CD14-positive monocyte (primary cell): ENCODE measurements at regions of chr20 and their contacts with region 1.

Region 1: DNA sequence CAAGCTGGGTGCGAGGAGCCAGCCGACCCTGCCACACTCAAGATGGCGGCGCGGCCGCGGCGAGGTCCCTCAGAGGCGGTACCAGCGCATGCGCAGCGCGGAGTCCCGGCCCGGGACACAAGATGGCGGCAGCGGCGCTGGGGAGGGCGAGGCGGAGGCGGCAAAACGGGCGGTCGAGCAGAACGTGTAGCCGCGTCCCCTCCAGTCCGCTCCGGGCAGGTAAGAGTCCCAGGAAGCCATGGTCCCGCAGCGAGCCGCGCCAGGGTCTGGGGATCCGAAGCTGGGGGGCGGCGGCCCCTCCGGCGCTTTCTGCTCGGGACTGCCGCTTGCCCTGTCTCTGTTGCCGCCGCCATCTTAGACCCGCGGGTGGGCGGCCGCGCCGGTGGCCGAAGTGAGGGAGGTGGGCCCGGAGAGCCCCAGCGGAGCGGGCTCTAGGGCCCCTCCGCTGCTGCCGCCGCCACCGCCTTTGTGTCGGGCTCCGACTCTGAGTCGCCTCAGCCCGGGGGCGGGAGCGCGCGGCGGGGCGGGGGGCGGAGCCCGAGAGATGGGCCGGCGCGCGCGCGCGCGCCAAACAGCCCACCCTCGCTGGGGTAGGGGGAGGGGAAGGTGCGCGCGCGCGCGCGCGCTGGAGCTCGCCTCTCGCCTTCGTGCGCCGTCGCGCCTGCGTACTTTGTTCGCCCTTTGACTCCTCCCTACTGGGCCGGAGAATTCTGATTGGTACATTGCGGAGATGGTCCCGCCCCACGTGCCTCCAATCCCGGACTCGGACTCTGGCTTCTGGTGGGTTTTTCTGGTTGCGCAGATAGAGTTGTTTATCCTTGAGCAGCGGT is at the start of gene PCIF1:
- DNase-seq: peak; percentile 97 to 98 (median 97)
- H3K4me3 ChIP-seq: peak within 1 kb of the TSS; percentile 98 to 100 (median 98)
- H3K4me3 Mint-ChIP-seq: peak within 1 kb of the TSS; percentile 96 to 99
- H3K27ac ChIP-seq: peak within 1 kb of the TSS; percentile 95
- H3K27ac Mint-ChIP-seq: peak within 1 kb of the TSS; percentile 96 to 99 (median 97)
- H3K4me1 ChIP-seq: peaks cover 16 to 21% of the 10 kb centered on the region in 2 donors
- H3K4me1 Mint-ChIP-seq: peaks cover 15% of the 10 kb centered on the region
- H3K27me3 ChIP-seq: no peaks in the 10 kb centered on the region
- H3K27me3 Mint-ChIP-seq: no peaks in the 10 kb centered on the region
- CTCF ChIP-seq: no peak
- polyA plus RNA-seq, gene PCIF1: 41.0 to 54.9 (median 50.4) TPM

Region 2: GRCh38 chr20:45798935-45799642 is 135.7 kb before region 1 on chr20:
- intact Hi-C with region 1: loop called in 1 of 2 experiments (anchors 10 kb)
- DNase-seq: peak; percentile 24 to 60 (median 53)
- H3K4me3 ChIP-seq: no peak overlapping the region
- H3K4me3 Mint-ChIP-seq: no peak overlapping the region
- H3K27ac ChIP-seq: peak overlapping the region in 1 of 2 donors; percentile 50
- H3K27ac Mint-ChIP-seq: peak overlapping the region in 5 of 7 donors; percentile 21 to 78 (median 62)
- H3K4me1 ChIP-seq: no peaks in the 10 kb centered on the region
- H3K4me1 Mint-ChIP-seq: peaks cover 12% of the 10 kb centered on the region
- H3K27me3 ChIP-seq: no peaks in the 10 kb centered on the region
- H3K27me3 Mint-ChIP-seq: peaks cover 0 to 2% (median 0%) of the 10 kb centered on the region in 3 donors
- CTCF ChIP-seq: peak; percentile 79

Region 3: DNA sequence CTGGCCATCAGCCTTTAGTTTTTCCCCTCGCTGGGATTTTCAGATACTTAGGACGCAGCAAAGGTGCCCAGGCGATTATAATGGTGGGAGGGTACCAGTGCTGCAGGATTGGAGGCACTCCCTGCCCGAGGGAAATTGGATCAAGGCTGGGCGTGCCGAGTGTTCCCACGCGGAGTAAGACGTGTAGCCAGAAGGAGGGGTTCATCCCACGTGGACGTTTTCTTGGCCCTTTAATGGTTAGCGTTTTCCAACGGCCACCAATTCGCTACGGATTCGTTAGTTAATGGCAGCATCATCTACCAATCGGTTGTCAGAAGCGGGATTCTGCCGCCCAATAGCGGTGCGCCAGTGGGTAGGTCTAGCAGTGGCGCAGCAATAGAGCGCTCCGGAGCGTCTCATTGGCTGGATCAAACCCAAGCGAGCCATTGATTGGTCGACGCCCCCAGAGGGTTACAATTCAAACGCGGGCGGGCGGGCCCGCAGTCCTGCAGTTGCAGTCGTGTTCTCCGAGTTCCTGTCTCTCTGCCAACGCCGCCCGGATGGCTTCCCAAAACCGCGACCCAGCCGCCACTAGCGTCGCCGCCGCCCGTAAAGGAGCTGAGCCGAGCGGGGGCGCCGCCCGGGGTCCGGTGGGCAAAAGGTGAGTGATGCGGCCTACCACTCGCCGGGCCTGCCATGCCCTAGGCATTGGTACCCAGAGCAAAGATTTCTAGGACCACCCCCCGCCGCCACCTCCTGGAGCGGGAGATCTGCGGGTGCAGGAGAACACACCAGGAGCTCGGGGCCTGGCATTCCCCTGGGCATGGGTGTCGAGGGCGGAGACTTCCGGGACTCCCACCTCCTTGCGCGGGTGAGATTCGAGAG is 122.4 kb before region 1 on chr20 and contains the start of gene UBE2C:
- intact Hi-C with region 1: loop called (anchors 10 kb)
- DNase-seq: peak; percentile 95 to 100 (median 97)
- H3K4me3 ChIP-seq: peak within 1 kb of the TSS; percentile 57 to 85 (median 80)
- H3K4me3 Mint-ChIP-seq: peak within 1 kb of the TSS; percentile 67 to 84
- H3K27ac ChIP-seq: peak within 1 kb of the TSS in 1 of 2 donors; percentile 65
- H3K27ac Mint-ChIP-seq: peak within 1 kb of the TSS; percentile 34 to 91 (median 75)
- H3K4me1 ChIP-seq: peaks cover 18 to 24% of the 10 kb centered on the region in 2 donors
- H3K4me1 Mint-ChIP-seq: peaks cover 22% of the 10 kb centered on the region
- H3K27me3 ChIP-seq: no peaks in the 10 kb centered on the region
- H3K27me3 Mint-ChIP-seq: no peaks in the 10 kb centered on the region
- CTCF ChIP-seq: no peak
- polyA plus RNA-seq, gene UBE2C: 0.15 to 0.58 TPM in 2 of 3 donors, not detected in the other

Region 4: DNA sequence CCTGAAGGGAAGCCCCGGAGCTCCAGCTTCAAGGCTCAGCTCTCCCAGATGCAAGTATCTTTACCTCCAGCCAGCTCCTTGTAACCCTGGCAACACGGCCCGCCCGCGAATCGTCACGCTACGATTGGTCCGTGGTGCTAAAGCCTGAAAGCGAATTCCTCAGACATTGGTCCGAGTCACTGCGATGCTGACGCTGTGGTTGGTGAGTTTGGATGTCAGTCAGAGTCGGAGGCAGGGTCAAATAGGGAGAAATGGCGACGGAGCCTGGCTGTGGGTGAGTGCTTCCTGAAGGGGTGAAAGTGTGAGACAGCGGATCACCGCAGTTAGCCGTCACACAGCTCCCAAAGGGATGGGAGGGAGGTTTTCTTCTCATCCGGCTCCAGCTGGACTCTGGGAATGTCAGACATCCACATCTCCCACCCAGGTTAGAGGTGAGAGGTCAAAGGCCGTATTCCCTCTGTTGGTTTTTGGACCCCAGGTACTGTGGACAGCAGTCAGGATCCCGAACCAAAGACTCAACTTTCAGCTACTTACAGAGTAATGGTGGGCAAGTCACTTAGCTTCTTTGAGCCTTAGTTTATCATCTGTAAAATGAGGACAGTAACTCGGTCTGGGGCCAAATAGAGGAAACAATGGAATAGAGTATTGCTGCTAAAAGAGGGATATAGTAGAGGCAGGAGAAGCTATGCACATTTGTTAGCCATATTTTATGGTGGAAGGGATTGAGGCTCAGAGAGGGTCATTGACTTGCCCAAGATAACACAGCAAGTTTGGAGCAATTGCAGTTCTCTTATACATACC is 53.6 kb before region 1 on chr20 and contains the start of gene ZSWIM1:
- intact Hi-C with region 1: loop called (anchors 1 to 5 kb)
- DNase-seq: peak; percentile 98 to 99 (median 98)
- H3K4me3 ChIP-seq: peak within 1 kb of the TSS; percentile 71 to 81 (median 78)
- H3K4me3 Mint-ChIP-seq: peak within 1 kb of the TSS; percentile 85 to 95
- H3K27ac ChIP-seq: peak within 1 kb of the TSS; percentile 76 to 95
- H3K27ac Mint-ChIP-seq: peak within 1 kb of the TSS; percentile 96 to 98 (median 98)
- H3K4me1 ChIP-seq: peaks cover 28 to 39% of the 10 kb centered on the region in 2 donors
- H3K4me1 Mint-ChIP-seq: peaks cover 33% of the 10 kb centered on the region
- H3K27me3 ChIP-seq: no peaks in the 10 kb centered on the region
- H3K27me3 Mint-ChIP-seq: no peaks in the 10 kb centered on the region
- CTCF ChIP-seq: no peak
- polyA plus RNA-seq, gene ZSWIM1: 2.5 to 2.6 (median 2.5) TPM

Region 5: GRCh38 chr20:45890985-45891983 is 43.5 kb before region 1 on chr20 and contains the starts of genes CTSA and NEURL2:
- intact Hi-C with region 1: loop called (anchors 2 to 5 kb)
- DNase-seq: peak; percentile 73 to 89 (median 82)
- H3K4me3 ChIP-seq: peak within 1 kb of the TSS; percentile 62 to 95 (median 72)
- H3K4me3 Mint-ChIP-seq: peak within 1 kb of the TSS; percentile 91 to 93
- H3K27ac ChIP-seq: peak within 1 kb of the TSS; percentile 59 to 87
- H3K27ac Mint-ChIP-seq: peak within 1 kb of the TSS; percentile 85 to 96 (median 91)
- H3K4me1 ChIP-seq: peaks cover 36 to 46% of the 10 kb centered on the region in 2 donors
- H3K4me1 Mint-ChIP-seq: peaks cover 33% of the 10 kb centered on the region
- H3K27me3 ChIP-seq: no peaks in the 10 kb centered on the region
- H3K27me3 Mint-ChIP-seq: no peaks in the 10 kb centered on the region
- CTCF ChIP-seq: no peak
- polyA plus RNA-seq, gene CTSA: 279 to 489 (median 366) TPM
- polyA plus RNA-seq, gene NEURL2: 0.14 to 1.1 TPM in 2 of 3 donors, not detected in the other

Region 6: DNA sequence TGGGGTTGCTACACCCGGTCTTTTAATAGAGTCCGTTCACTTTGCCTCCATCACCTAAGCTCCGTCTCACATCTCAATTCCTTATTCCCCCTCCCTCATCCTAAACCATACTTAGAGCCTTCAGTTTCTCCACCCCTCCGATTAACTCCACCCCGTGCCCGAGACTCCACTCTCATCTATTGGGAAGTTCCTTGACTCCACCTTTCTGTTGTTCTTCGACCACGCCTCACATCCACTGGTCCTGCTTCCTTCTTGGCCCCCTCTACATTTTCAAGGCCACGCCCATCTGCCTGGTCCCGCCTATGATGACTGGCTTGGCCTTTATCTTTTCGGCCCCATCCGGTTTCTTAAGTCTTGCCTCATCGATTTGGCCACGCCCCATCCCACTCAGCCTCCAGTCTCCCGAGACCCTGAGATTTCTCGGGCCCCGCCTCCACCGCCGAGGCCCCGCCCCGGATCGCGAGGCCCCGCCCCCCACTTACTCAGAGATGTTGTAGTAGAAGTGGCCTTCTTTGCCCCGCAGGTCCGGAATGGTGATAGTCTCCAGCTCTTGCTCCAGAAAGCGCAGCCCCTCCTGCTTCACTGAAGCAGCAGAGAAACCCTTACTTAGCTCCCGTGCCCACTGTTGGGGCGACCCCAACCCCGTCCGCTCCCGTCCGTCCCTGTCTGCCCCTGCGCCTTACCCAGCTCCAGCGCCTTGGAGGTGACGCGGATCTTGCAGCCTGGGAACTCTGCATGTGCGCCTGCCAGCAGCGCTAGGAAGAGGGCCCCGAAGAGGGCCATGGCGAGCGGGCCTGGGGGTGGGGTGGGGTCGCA is 23.9 kb before region 1 on chr20:
- intact Hi-C with region 1: loop called (anchors 2 kb)
- DNase-seq: peak; percentile 99
- H3K4me3 ChIP-seq: peak overlapping the region; percentile 52 to 81 (median 53)
- H3K4me3 Mint-ChIP-seq: peak overlapping the region; percentile 88 to 95
- H3K27ac ChIP-seq: peak overlapping the region; percentile 82 to 89
- H3K27ac Mint-ChIP-seq: peak overlapping the region; percentile 87 to 99 (median 95)
- H3K4me1 ChIP-seq: peaks cover 62 to 65% of the 10 kb centered on the region in 2 donors
- H3K4me1 Mint-ChIP-seq: peaks cover 48% of the 10 kb centered on the region
- H3K27me3 ChIP-seq: no peaks in the 10 kb centered on the region
- H3K27me3 Mint-ChIP-seq: peaks cover 2 to 3% (median 3%) of the 10 kb centered on the region in 3 donors
- CTCF ChIP-seq: no peak

Region 7: GRCh38 chr20:45971675-45972499 is 37.1 kb after region 1 on chr20 and contains the start of gene ZNF335:
- intact Hi-C with region 1: loop called (anchors 1 to 2 kb)
- DNase-seq: peak; percentile 86 to 98 (median 94)
- H3K4me3 ChIP-seq: peak within 1 kb of the TSS; percentile 90 to 96 (median 96)
- H3K4me3 Mint-ChIP-seq: peak within 1 kb of the TSS; percentile 83 to 88
- H3K27ac ChIP-seq: peak within 1 kb of the TSS; percentile 97 to 99
- H3K27ac Mint-ChIP-seq: peak within 1 kb of the TSS; percentile 90 to 100 (median 100)
- H3K4me1 ChIP-seq: peaks cover 45 to 47% of the 10 kb centered on the region in 2 donors
- H3K4me1 Mint-ChIP-seq: peaks cover 37% of the 10 kb centered on the region
- H3K27me3 ChIP-seq: no peaks in the 10 kb centered on the region
- H3K27me3 Mint-ChIP-seq: peaks cover 0 to 2% (median 0%) of the 10 kb centered on the region in 3 donors
- CTCF ChIP-seq: peak; percentile 22
- polyA plus RNA-seq, gene ZNF335: 2.7 to 39.6 (median 3.1) TPM